OCI-LY7 (cell line): ENCODE measurements at regions of chr3 and their contacts with region 1.

Region 1: DNA sequence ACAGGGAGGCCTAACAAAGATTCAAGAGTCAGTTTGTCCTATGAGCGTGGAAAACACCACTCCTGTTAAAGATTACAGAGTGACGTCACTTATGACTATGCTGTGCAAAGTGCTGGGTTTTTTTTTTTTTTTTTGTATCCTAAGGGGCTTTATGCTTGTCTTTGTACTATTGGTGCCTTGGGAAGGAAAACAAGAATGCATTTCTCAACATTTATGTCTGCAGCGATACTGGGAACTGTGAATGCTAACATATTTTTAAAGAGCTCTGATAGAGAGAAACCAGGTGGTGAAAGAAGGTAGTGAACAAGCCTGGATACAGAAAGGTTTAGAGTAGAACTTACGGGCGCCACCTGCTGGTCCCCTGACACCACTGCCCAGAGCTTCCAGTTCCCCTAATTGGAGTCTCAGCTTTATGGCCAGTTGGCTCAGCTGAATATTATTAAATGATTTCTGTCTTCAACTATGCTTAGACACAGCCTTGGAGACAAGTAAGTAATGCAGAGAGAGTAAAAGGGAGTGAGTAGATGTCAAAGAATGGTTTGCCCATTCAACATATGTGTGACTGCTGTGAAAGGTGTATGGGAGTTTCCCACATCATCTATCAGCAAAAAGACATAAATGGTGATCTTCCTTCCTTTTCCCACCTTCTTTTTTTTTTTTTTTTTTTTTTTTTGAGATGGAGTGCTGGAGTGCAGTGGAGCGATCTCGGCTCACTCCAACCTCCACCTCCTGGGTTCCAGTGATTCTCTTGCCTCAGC is 807.9 kb upstream of the CFAP20DC start:
- DNase-seq: peak; percentile 78
- H3K4me3 ChIP-seq: no peak overlapping the region
- H3K27ac ChIP-seq: no peak overlapping the region
- H3K4me1 ChIP-seq: no peaks in the 10 kb centered on the region
- CTCF ChIP-seq: peak; percentile 94

Region 2: GRCh38 chr3:59212128-59212779 is 645.5 kb before region 1 on chr3:
- CTCF ChIA-PET with region 1: no interaction called
- POLR2A ChIA-PET with region 1: no interaction called
- intact Hi-C with region 1: loop called (anchors 2 kb)
- DNase-seq: peak; percentile 40
- H3K4me3 ChIP-seq: no peak overlapping the region
- H3K27ac ChIP-seq: no peak overlapping the region
- H3K4me1 ChIP-seq: no peaks in the 10 kb centered on the region
- CTCF ChIP-seq: peak; percentile 83

Region 3: DNA sequence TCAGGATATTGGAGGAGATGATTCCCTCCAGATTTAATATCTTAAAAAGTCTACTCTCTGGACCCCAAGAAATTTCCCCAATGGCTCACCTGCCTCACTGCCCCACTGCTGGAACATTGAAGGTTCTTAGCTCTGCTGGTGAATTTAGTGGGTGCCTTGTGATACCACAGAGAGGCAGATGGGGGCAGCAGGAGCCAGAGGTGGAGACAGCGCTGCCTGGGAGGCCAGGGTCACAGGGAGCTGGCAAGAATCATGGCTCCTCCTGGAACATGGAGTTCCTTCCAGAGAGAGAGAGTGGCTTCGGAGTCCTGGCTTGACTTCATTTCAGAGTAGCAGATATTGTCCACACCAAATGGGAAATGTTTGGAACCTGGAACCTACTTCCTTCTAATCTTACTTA is 544.4 kb before region 1 on chr3:
- CTCF ChIA-PET with region 1: no interaction called
- POLR2A ChIA-PET with region 1: no interaction called
- intact Hi-C with region 1: loop called (anchors 5 kb)
- DNase-seq: peak; percentile 19
- H3K4me3 ChIP-seq: no peak overlapping the region
- H3K27ac ChIP-seq: no peak overlapping the region
- H3K4me1 ChIP-seq: no peaks in the 10 kb centered on the region
- CTCF ChIP-seq: peak; percentile 76

Region 4: GRCh38 chr3:59575113-59576001 is 282.4 kb before region 1 on chr3:
- CTCF ChIA-PET with region 1: no interaction called
- POLR2A ChIA-PET with region 1: no interaction called
- intact Hi-C with region 1: loop called (anchors 1 kb)
- DNase-seq: peak; percentile 74
- H3K4me3 ChIP-seq: no peak overlapping the region
- H3K27ac ChIP-seq: no peak overlapping the region
- H3K4me1 ChIP-seq: no peaks in the 10 kb centered on the region
- CTCF ChIP-seq: peak; percentile 96

Region 5: GRCh38 chr3:59818033-59818920 is 39.5 kb before region 1 on chr3:
- CTCF ChIA-PET with region 1: no interaction called
- POLR2A ChIA-PET with region 1: no interaction called
- intact Hi-C with region 1: no loop called
- DNase-seq: no peak
- H3K4me3 ChIP-seq: no peak overlapping the region
- H3K27ac ChIP-seq: no peak overlapping the region
- H3K4me1 ChIP-seq: no peaks in the 10 kb centered on the region
- CTCF ChIP-seq: no peak

Region 6: GRCh38 chr3:59925946-59926345 is 68.2 kb after region 1 on chr3:
- CTCF ChIA-PET with region 1: no interaction called
- POLR2A ChIA-PET with region 1: no interaction called
- intact Hi-C with region 1: no loop called
- DNase-seq: no peak
- H3K4me3 ChIP-seq: no peak overlapping the region
- H3K27ac ChIP-seq: no peak overlapping the region
- H3K4me1 ChIP-seq: no peaks in the 10 kb centered on the region
- CTCF ChIP-seq: no peak